Activated CD4-positive, alpha-beta memory T cell treated with anti-CD3 and anti-CD28 coated beads, Interleukin-2, amount 10 ng/mL, durations not matched to agents 7 days and 5 days (primary cell): ENCODE measurements at regions of chr4 and their contacts with region 1.

Region 1: DNA sequence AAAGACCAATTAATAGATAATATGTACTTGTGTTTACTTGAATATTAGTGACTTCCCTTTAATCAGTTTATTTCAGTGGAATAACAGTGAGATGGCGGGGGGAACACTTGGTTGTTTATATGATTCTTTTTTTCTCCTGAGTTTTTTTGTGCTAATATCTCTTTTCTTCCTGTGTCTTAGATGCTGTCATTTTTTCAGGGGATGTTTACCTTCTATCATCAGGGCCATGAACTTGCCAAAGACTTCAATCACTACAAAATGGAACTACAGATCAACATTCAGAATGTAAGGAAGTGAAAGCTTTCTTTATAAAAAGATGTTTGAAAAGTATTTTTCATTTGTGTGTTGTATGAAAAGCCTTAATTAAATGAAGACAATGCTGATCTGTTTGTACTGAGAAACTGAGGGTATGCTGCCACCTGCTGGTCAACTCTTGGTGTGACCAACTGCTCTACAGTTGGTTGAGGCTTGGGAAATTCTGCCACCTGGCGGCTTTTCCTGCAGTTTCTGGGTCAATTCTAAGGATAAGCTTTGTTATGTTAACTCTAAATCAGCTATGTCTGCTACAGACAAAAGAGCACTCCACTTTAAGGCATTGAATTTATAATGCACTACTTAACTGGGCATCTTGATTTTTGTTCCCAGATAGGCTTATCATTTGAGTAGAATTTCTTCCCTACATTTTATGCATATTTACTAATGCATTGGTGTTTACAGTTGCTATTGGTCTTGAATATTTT is 134.8 kb downstream of the ARHGAP10 start:
- DNase-seq: peak; percentile 94
- H3K4me3 Mint-ChIP-seq: no peak overlapping the region
- H3K27ac Mint-ChIP-seq: no peak overlapping the region
- H3K4me1 Mint-ChIP-seq: peaks cover 6% of the 10 kb centered on the region
- H3K27me3 Mint-ChIP-seq: no peaks in the 10 kb centered on the region

Region 2: GRCh38 chr4:147560637-147561036 is 306.1 kb before region 1 on chr4:
- CTCF ChIA-PET with region 1: no interaction called
- POLR2A ChIA-PET with region 1: no interaction called
- DNase-seq: no peak
- H3K4me3 Mint-ChIP-seq: no peak overlapping the region
- H3K27ac Mint-ChIP-seq: no peak overlapping the region
- H3K4me1 Mint-ChIP-seq: no peaks in the 10 kb centered on the region
- H3K27me3 Mint-ChIP-seq: peaks cover 2% of the 10 kb centered on the region

Region 3: GRCh38 chr4:147596981-147597380 is 269.7 kb before region 1 on chr4:
- CTCF ChIA-PET with region 1: interaction called, 20 read pairs
- POLR2A ChIA-PET with region 1: no interaction called
- DNase-seq: no peak
- H3K4me3 Mint-ChIP-seq: no peak overlapping the region
- H3K27ac Mint-ChIP-seq: no peak overlapping the region
- H3K4me1 Mint-ChIP-seq: peaks cover 5% of the 10 kb centered on the region
- H3K27me3 Mint-ChIP-seq: peaks cover 2% of the 10 kb centered on the region

Region 4: GRCh38 chr4:147644471-147644870 is 222.2 kb before region 1 on chr4:
- CTCF ChIA-PET with region 1: interaction called, 23 read pairs
- POLR2A ChIA-PET with region 1: no interaction called
- DNase-seq: no peak
- H3K4me3 Mint-ChIP-seq: no peak overlapping the region
- H3K27ac Mint-ChIP-seq: no peak overlapping the region
- H3K4me1 Mint-ChIP-seq: peaks cover 9% of the 10 kb centered on the region
- H3K27me3 Mint-ChIP-seq: no peaks in the 10 kb centered on the region

Region 5: GRCh38 chr4:147689067-147689466 is 177.6 kb before region 1 on chr4:
- CTCF ChIA-PET with region 1: interaction called, 40 read pairs
- POLR2A ChIA-PET with region 1: no interaction called
- DNase-seq: peak; percentile 59
- H3K4me3 Mint-ChIP-seq: peak overlapping the region; percentile 38
- H3K27ac Mint-ChIP-seq: peak overlapping the region; percentile 89
- H3K4me1 Mint-ChIP-seq: peaks cover 34% of the 10 kb centered on the region
- H3K27me3 Mint-ChIP-seq: peaks cover 11% of the 10 kb centered on the region

Region 6: DNA sequence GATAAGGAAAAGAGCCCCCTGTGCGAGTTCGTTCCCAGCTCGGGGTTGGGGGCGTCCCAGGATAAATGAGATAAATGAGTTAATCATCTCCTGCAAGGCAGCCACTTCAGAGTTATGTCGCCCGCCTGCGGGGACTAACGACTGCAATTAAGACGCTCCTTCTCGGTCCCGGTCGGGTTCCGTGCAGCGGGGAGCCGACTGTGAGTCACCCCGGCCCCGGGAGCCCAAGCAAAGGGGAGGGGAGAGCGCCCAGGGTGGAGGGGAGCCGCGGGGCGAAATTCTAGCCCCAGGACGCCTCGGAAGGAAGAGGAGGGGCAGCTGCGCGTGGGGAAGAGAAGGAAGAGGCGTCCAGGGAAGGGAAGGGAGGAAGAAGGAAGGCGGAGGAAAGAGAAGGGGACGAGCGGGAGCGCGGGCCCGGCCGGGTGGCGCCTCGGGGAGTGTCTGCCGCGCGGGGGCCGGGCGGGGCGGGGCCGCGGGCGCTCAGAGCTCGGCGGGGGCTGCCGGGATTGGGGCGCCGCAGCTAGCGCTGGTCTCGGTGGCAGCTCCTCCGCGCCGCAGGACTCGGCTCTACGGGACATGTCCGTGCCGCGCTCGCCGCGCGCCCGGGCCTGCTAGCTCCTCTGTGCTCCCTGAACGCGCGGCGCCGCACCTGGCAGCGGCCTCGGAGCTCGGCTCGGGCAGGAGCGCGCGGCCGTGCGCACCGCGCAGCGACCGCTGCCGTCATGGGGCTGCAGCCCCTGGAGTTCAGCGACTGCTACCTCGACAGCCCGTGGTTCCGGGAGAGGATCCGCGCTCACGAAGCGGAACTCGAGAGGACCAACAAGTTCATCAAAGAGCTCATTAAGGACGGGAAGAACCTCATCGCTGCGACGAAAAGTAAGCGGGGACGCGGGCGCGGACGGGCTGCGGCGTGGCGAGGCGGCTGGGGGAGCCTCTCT is 134.9 kb before region 1 on chr4 and contains the start of gene ARHGAP10:
- CTCF ChIA-PET with region 1: interaction called, 74 read pairs
- POLR2A ChIA-PET with region 1: interaction called, 9 read pairs
- DNase-seq: peak; percentile 71
- H3K4me3 Mint-ChIP-seq: peak within 1 kb of the TSS; percentile 95
- H3K27ac Mint-ChIP-seq: peak within 1 kb of the TSS; percentile 91
- H3K4me1 Mint-ChIP-seq: peaks cover 55% of the 10 kb centered on the region
- H3K27me3 Mint-ChIP-seq: peaks cover 12% of the 10 kb centered on the region
- total RNA-seq, gene ARHGAP10: 19.7 to 22.2 TPM

Region 7: GRCh38 chr4:147793569-147794313 is 73.0 kb before region 1 on chr4:
- CTCF ChIA-PET with region 1: interaction called, 26 read pairs
- POLR2A ChIA-PET with region 1: interaction called, 3 read pairs
- DNase-seq: peak; percentile 38
- H3K4me3 Mint-ChIP-seq: peak overlapping the region; percentile 5
- H3K27ac Mint-ChIP-seq: peak overlapping the region; percentile 59
- H3K4me1 Mint-ChIP-seq: peaks cover 53% of the 10 kb centered on the region
- H3K27me3 Mint-ChIP-seq: no peaks in the 10 kb centered on the region

Region 8: DNA sequence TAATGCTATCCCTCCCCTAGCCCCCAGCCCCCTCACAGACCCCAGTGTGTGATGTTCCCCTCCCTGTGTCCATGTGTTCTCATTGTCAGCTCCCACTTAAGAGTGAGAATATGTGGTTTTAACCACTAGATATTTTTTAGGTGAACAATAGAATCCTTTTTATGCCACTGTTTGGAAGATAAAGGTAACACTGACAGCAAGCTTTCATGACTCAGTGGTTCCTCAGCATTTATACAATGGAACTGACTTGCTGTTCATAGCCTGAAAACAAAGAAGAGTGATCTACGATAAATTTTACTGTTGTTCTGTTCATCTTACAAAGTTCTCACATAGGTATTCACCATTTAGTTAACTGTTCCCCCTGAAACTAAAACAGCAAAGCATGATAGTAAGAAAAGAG is 13.0 kb after region 1 on chr4:
- CTCF ChIA-PET with region 1: interaction called, 33 read pairs
- POLR2A ChIA-PET with region 1: no interaction called
- DNase-seq: no peak
- H3K4me3 Mint-ChIP-seq: no peak overlapping the region
- H3K27ac Mint-ChIP-seq: no peak overlapping the region
- H3K4me1 Mint-ChIP-seq: no peaks in the 10 kb centered on the region
- H3K27me3 Mint-ChIP-seq: no peaks in the 10 kb centered on the region

Region 9: DNA sequence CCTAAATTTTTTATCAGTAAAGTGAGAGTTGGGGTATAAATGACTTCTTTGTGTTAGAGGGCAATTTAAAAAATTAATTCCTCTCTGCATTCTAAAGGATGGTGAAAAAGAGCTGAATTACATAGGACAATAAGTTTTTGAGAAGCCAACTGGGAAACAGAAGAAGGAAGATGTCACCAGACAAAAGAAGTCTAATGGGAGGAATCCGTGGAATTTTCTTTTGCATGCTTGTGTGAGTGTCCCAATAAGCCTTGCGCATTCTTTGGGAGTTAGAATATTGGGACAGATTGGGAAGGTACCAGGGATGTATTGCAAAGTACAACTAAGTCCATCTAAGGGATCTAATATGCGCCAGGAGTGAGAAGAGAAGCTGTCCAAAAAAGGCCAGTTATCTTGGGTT is 610.6 kb after region 1 on chr4:
- CTCF ChIA-PET with region 1: no interaction called
- POLR2A ChIA-PET with region 1: no interaction called
- DNase-seq: no peak
- H3K4me3 Mint-ChIP-seq: no peak overlapping the region
- H3K27ac Mint-ChIP-seq: no peak overlapping the region
- H3K4me1 Mint-ChIP-seq: no peaks in the 10 kb centered on the region
- H3K27me3 Mint-ChIP-seq: peaks cover 2% of the 10 kb centered on the region